Left lung (tissue), 14 donors: ENCODE measurements at regions of chr11 and their contacts with region 1.

Region 1: DNA sequence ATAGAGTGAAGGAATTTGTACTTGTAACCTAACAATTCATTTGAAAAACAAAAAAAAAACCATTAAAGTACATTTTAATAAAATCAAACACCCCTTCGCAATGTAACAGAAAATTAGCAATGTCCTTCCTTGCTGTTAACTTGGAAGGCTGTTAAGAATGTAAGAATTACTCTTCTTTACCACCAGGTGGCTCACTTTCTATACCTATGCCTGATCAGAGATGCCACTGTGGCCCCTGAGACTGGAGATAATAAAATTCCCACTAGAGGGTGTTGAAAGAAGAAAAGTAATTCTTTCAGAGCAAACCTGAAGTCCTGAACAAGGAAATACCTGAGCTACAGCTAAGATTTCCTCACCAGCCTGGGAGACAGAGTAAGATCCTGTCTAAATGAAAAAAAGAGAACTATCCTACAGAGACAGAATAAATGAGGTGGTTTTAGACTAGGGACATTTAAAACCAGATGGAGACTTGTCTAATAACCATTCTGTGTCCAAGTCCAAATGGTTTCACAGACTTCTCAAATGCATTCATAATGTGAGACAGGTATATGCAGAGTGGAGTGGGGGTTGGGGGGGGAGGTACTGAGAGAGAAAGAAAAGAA is 1089.3 kb downstream of the FAM181B start:
- DNase-seq: peak in 2 of 4 donors; percentile 22 to 42
- ATAC-seq: peak; percentile 70
- H3K4me3 ChIP-seq: no peak overlapping the region
- H3K27ac ChIP-seq: no peak overlapping the region
- H3K4me1 ChIP-seq: no peaks in the 10 kb centered on the region
- H3K27me3 ChIP-seq: no peaks in the 10 kb centered on the region
- CTCF ChIP-seq: peak; percentile 41 to 60

Region 2: GRCh38 chr11:81459766-81460306 is 184.5 kb before region 1 on chr11:
- intact Hi-C with region 1: no loop called
- DNase-seq: no peak
- ATAC-seq: no peak
- H3K4me3 ChIP-seq: no peak overlapping the region
- H3K27ac ChIP-seq: no peak overlapping the region
- H3K4me1 ChIP-seq: no peaks in the 10 kb centered on the region
- H3K27me3 ChIP-seq: no peaks in the 10 kb centered on the region
- CTCF ChIP-seq: no peak

Region 3: DNA sequence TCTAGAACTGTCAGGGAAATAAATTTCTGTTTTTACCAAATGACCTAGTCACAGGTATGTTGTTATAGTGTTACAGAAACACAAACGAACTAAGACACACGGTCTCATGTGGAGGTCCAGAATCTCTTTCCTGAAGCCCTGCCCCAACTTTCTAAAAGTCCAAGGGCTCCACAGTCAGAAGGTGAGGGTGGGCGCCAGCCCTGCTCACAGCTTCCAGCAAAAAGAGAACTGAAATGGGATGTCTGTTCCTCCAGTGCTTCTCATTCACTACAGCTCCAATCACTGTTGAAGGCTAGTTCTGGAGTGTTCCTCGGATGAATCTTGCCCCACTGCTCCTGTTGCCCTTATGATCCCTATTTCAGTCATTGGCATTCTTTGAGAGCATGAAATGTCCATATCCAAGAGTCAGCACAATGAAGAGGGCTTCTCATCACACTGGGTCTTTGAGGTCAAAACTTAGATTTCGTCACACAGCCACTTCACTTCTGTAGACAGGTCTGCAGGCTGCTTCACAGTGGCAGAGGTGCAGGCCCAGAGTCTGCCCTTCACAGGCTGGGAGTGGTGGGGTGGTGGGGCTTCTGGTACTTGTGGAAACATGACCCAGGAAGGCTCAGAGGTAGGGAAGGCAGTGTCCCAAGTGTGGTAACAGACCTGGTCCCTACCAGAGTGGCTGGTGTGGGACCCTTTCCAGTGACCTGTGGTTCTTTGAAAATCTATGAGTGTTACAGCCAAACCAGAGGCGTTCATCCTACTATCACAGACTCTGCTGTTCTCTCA is 1054.4 kb after region 1 on chr11:
- intact Hi-C with region 1: loop called in 1 of 2 experiments (anchors 10 kb)
- DNase-seq: no peak
- ATAC-seq: no peak
- H3K4me3 ChIP-seq: no peak overlapping the region
- H3K27ac ChIP-seq: no peak overlapping the region
- H3K4me1 ChIP-seq: no peaks in the 10 kb centered on the region
- H3K27me3 ChIP-seq: no peaks in the 10 kb centered on the region
- CTCF ChIP-seq: no peak